Right cardiac atrium (tissue), 5 donors: ENCODE measurements at regions of chr3 and their contacts with region 1.

Region 1: DNA sequence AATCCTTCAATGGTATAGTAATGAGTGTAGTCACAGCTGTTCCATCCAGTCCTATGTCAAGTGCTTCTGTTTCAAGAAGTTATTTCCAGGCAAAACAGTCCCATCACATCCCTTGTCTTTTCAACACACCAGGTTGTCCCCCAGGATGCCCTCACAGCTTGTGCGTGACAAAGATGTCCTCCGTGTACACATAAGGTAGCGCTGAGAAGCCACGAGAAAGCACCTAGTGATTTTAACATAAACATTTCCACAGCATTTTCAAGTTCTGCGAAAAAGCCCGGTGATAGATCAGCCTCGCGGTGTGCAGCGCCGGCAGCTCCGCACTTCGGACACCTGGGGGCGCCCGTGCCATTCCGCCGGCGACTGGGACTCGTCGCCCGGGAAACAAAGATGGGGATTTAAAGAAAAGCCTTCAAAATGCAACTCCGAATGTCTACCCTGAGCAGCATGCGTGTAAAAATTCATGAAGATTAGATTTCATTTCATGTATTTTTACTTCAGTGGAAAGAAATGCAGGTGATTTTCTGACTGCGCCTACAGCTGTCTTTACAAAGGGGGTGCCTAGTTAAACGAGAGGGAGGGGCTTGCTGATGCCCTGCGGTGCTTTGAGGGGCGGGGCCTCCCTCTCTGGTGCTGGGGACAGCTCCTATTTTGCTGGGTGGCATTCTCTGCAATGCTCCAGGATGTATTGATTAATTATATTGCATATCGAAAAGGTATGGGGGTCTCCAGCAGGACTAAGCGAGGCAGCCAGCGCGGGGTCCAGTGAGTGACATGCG is 49.9 kb downstream of the KY start:
- DNase-seq: peak; percentile 57 to 85 (median 82)
- ATAC-seq: peak; percentile 76
- H3K4me3 ChIP-seq: no peak overlapping the region
- H3K27ac ChIP-seq: no peak overlapping the region
- H3K4me1 ChIP-seq: no peaks in the 10 kb centered on the region
- H3K27me3 ChIP-seq: no peaks in the 10 kb centered on the region

Region 2: GRCh38 chr3:134114726-134115125 is 486.1 kb before region 1 on chr3:
- intact Hi-C with region 1: no loop called
- DNase-seq: no peak
- ATAC-seq: no peak
- H3K4me3 ChIP-seq: no peak overlapping the region
- H3K27ac ChIP-seq: no peak overlapping the region
- H3K4me1 ChIP-seq: no peaks in the 10 kb centered on the region
- H3K27me3 ChIP-seq: no peaks in the 10 kb centered on the region

Region 3: DNA sequence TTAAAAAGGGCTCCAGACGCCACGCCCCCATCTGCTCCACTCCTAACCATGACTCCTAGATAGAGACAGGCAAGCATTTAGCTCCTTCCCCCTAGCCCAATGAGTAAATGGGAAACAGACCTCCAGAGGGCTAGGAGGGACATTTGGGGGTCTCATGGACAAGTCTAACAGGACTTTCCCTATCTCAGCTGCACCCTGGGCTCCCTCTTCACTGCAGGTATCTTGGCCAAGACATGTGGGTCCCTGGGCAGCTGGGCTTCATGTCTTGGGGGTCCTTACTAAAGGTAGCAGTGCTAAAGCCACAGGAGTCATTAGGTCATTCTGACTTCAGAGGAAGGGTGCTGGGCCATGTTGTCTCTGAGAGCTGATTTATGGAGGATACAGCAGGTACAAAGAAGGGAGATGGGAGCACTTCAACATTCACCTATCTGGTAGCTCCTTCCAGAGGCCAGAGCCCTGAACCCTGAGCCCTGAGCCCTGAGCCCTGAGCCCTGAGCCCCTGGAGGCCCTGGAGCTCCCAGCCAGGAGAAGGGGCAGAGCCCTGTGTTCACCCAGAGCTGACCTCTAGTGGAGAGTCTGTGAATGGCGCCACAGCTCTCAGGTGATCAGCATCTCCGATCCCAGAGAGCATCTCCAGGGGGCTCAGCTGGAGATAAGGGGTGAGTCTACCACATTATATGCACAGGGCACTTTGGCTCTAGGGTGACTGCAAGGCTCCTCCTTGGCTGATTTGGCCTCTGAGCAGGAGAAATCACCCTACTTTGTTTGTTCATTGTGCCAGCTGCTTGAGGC is 154.1 kb after region 1 on chr3:
- intact Hi-C with region 1: loop called in 1 of 4 experiments (anchors 10 kb)
- DNase-seq: peak in 2 of 3 donors; percentile 62 to 64
- ATAC-seq: peak in 1 of 2 donors; percentile 36
- H3K4me3 ChIP-seq: no peak overlapping the region
- H3K27ac ChIP-seq: no peak overlapping the region
- H3K4me1 ChIP-seq: no peaks in the 10 kb centered on the region
- H3K27me3 ChIP-seq: no peaks in the 10 kb centered on the region